Activated CD8-positive, alpha-beta T cell treated with anti-CD3 and anti-CD28 coated beads for 36 hours (primary cell): ENCODE measurements at regions of chr2 and their contacts with region 1.

Region 1: GRCh38 chr2:230902180-230902899 is 22.7 kb downstream of the GPR55 start:
- DNase-seq: peak; percentile 79
- ATAC-seq: peak; percentile 51
- H3K4me3 Mint-ChIP-seq: no peak overlapping the region
- H3K27ac Mint-ChIP-seq: no peak overlapping the region
- H3K4me1 Mint-ChIP-seq: peaks cover 62% of the 10 kb centered on the region
- H3K27me3 Mint-ChIP-seq: no peaks in the 10 kb centered on the region
- CTCF ChIP-seq: peak; percentile 93

Region 2: GRCh38 chr2:230824406-230824978 is 77.8 kb before region 1 on chr2:
- CTCF ChIA-PET with region 1: interaction called, 12 read pairs
- POLR2A ChIA-PET with region 1: interaction called, 3 read pairs
- intact Hi-C with region 1: no loop called
- DNase-seq: peak; percentile 65
- ATAC-seq: peak; percentile 81
- H3K4me3 Mint-ChIP-seq: no peak overlapping the region
- H3K27ac Mint-ChIP-seq: no peak overlapping the region
- H3K4me1 Mint-ChIP-seq: peaks cover 7% of the 10 kb centered on the region
- H3K27me3 Mint-ChIP-seq: peaks cover 30% of the 10 kb centered on the region
- CTCF ChIP-seq: peak; percentile 69

Region 3: GRCh38 chr2:230847883-230848388 is 54.4 kb before region 1 on chr2:
- CTCF ChIA-PET with region 1: interaction called, 24 read pairs
- POLR2A ChIA-PET with region 1: no interaction called
- intact Hi-C with region 1: no loop called
- DNase-seq: peak; percentile 97
- ATAC-seq: peak; percentile 97
- H3K4me3 Mint-ChIP-seq: no peak overlapping the region
- H3K27ac Mint-ChIP-seq: no peak overlapping the region
- H3K4me1 Mint-ChIP-seq: peaks cover 10% of the 10 kb centered on the region
- H3K27me3 Mint-ChIP-seq: peaks cover 21% of the 10 kb centered on the region
- CTCF ChIP-seq: peak; percentile 96

Region 4: GRCh38 chr2:230877732-230878598 is 24.4 kb before region 1 on chr2:
- CTCF ChIA-PET with region 1: interaction called, 10 read pairs
- POLR2A ChIA-PET with region 1: interaction called, 5 read pairs
- intact Hi-C with region 1: no loop called
- DNase-seq: peak; percentile 88
- ATAC-seq: peak; percentile 90
- H3K4me3 Mint-ChIP-seq: peak overlapping the region; percentile 33
- H3K27ac Mint-ChIP-seq: peak overlapping the region; percentile 92
- H3K4me1 Mint-ChIP-seq: peaks cover 52% of the 10 kb centered on the region
- H3K27me3 Mint-ChIP-seq: no peaks in the 10 kb centered on the region
- CTCF ChIP-seq: no peak

Region 5: DNA sequence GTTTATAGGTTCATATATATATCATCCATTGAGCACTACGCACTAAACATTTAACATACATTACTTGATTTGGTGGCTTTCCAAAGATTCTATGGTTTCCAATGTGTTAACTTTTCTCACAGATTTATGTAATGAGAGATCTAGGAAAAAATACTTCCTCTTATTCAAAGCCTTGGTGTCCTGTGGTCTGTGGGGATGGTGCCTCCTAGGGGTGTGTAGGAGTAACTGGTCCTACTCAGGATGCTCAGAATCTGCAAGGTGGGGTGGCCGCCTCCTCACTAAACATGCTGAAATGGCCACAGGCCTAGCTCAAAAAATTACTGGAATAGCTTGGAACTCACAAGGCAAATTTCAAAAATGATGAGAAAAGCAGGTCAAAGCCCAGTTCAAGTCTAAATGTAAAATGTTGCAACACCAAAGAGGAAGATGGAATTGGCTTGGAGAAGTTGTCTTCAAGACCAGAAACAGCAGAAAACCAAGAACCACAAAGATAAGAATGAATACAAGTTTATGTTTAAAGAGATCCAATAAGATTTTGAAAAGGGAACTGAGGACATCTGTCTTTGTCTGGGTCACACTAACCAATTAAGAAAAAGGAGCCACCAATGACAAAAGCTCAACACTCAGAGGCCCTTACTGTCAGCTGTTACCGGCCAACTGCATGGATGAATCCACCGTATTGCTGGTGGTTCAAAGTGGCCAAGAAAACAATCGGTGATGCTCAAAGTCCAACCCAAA is 11.2 kb after region 1 on chr2:
- CTCF ChIA-PET with region 1: interaction called, 40 read pairs
- POLR2A ChIA-PET with region 1: interaction called, 4 read pairs
- intact Hi-C with region 1: no loop called
- DNase-seq: peak; percentile 58
- ATAC-seq: peak; percentile 50
- H3K4me3 Mint-ChIP-seq: no peak overlapping the region
- H3K27ac Mint-ChIP-seq: no peak overlapping the region
- H3K4me1 Mint-ChIP-seq: peaks cover 69% of the 10 kb centered on the region
- H3K27me3 Mint-ChIP-seq: peaks cover 2% of the 10 kb centered on the region
- CTCF ChIP-seq: peak; percentile 58

Region 6: DNA sequence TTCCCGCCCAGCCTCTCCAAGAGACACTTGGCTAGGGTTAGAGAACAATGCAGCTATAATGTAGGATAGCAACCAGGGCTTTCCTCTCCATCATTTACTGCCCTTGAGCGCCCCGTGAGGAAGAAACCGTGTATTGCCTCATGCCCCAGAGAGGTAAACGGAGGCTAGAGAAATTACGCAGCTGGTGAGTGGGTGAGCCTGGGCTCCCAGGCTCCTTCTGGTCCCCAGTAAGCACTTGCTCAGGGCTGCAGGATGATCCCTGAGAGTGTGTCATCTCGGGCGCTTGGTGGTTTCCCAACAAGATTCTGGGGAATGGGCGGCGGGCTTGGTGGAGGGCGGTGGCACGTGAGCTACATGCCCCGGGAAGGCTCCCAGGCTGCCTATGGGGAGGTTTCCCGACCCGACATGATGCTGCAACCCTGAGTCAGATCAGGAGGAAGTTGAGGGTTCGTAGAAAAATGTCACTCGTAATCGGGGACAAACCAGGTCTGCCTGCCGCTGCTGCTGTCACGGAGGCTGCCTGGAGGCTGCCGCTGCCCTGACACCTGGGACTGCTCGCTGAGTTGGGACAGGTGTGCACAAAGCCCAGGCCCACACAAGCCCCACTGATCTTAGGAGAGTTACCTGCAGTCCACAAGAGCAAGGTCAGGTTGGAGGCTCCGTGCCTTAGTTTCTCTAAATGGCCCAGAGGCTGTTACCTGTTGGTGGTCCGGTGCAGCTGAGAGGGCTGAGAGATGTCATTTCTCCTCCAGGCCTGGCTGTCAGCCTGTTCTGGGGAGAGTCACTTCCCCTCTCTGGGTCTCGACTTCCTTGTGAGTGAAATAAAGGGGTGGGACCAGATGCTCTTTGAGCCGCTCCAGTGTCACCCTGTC is 22.4 kb after region 1 on chr2 and contains the start of gene GPR55:
- CTCF ChIA-PET with region 1: interaction called, 72 read pairs
- POLR2A ChIA-PET with region 1: interaction called, 42 read pairs
- intact Hi-C with region 1: loop called (anchors 2 kb)
- DNase-seq: peak; percentile 89
- ATAC-seq: peak; percentile 57
- H3K4me3 Mint-ChIP-seq: peak within 1 kb of the TSS; percentile 74
- H3K27ac Mint-ChIP-seq: peak within 1 kb of the TSS; percentile 98
- H3K4me1 Mint-ChIP-seq: peaks cover 73% of the 10 kb centered on the region
- H3K27me3 Mint-ChIP-seq: no peaks in the 10 kb centered on the region
- CTCF ChIP-seq: peak; percentile 47
- total RNA-seq, gene GPR55: 5.0 to 5.3 TPM

Region 7: DNA sequence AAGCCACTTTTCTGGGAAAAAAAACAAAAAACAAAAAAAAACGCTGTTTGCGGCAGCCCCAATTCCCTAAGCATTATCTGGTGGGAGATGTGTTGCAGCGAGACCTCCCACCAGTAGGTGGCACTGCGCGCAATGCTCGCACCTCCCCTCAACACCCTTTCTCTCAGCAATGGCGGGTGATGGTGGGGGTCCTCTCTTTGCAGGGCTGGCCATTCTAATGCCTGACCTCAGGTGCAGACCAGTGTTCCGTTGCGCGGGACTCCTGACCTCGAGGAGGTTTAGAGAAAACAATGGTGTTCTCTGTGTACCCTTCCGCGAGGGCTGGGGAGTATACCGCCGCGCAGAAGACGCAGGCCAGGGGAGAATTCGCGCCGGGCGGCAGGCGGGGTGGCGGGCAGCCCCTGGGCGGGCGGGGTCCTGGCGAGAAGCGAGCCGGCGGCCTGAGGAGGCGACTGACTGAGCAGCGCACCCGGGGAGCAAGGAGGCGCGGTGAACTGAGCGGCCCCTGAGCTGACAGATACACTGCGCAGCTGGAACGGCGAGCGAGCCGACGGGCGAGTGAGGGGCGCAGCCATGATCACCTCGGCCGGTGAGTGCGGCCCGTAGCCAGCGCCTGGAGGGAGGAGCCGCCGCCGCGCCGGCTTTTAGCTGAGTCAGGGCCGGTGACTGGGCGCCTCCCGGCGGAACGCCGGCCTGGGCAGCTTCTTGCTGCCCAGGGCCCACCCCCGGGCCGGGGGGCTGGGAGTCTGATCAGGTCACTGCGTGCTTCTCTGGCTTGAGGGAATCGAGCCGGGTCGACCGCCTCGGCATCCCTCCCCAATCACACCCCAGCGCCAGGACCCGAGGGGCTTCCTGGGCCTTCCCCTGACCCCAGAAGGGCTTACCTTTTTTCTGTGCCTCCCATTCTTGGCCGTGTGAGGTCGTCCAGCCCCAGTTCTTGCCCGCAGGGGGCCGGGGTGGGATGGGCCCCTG is 154.4 kb after region 1 on chr2 and contains the start of gene PSMD1:
- CTCF ChIA-PET with region 1: interaction called, 21 read pairs
- POLR2A ChIA-PET with region 1: interaction called, 3 read pairs
- intact Hi-C with region 1: loop called (anchors 5 kb)
- DNase-seq: peak; percentile 96
- ATAC-seq: peak; percentile 86
- H3K4me3 Mint-ChIP-seq: peak within 1 kb of the TSS; percentile 81
- H3K27ac Mint-ChIP-seq: peak within 1 kb of the TSS; percentile 100
- H3K4me1 Mint-ChIP-seq: peaks cover 48% of the 10 kb centered on the region
- H3K27me3 Mint-ChIP-seq: peaks cover 4% of the 10 kb centered on the region
- CTCF ChIP-seq: peak; percentile 93
- total RNA-seq, gene PSMD1: 106 to 114 TPM

Region 8: GRCh38 chr2:231222318-231223055 is 320.1 kb after region 1 on chr2:
- CTCF ChIA-PET with region 1: no interaction called
- POLR2A ChIA-PET with region 1: no interaction called
- intact Hi-C with region 1: no loop called
- DNase-seq: no peak
- ATAC-seq: no peak
- H3K4me3 Mint-ChIP-seq: no peak overlapping the region
- H3K27ac Mint-ChIP-seq: no peak overlapping the region
- H3K4me1 Mint-ChIP-seq: no peaks in the 10 kb centered on the region
- H3K27me3 Mint-ChIP-seq: no peaks in the 10 kb centered on the region
- CTCF ChIP-seq: no peak